ENCODE measurements at regions of chr2 and their contacts with region 1.

Region 1: DNA sequence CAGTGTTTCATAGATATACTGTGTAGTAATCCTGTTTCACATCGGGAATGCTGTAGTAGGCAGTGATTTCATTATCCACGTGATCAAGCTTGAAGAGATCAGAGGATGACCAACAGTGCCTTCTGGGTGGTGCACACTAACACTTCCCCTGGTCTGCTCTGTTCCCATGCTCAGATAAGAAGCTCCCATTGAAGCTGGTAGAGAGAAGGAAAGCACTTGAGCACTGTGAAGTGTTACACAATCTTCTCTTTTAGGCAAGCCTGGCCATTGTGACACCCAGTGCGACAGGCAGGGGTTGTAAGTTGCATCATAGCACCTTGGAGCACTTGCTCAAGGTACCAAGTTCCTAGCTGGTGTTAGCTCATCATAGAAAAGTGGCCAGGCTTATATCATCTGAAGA is 30.6 kb upstream of the GPD2 start:
- DNase-seq: no peak
- H3K4me3 ChIP-seq: no peak overlapping the region
- H3K27me3 ChIP-seq: no peaks in the 10 kb centered on the region
- CTCF ChIP-seq: no peak

Region 2: DNA sequence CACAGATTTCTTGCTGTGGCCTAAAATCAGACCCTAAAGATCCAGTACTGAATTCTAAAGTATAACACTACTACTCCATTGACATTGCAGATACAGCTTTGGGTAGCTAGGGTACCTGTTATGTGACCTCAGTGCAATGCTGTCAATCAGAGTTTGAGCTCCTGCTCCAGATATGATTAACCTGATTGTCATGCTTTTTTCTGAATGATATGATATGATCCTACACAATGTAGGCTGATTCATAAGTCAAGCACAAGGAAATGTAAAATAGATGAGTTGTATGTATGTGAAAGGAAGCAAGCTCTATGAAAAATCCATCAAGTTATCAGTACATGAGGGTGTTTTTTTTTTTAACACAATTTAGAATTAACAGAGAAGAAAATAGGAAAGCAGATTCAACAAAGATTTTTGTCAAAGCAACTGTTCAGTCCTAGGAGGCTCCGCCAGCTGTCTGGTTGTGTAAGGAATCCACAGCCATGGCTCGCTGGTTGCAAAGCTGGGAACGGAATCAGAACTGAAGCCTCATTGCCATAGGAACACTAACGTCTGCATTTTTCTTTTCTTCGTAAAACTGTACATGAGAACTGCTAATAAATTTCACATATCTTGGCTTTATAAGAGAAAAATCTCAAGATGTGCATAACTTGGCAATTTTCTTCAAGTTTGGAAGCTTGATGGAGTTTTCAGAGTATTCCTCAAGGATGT is 126.0 kb before region 1 on chr2:
- CTCF ChIA-PET with region 1: no interaction called
- POLR2A ChIA-PET with region 1: interaction called, 21 read pairs
- DNase-seq: no peak
- H3K4me3 ChIP-seq: no peak overlapping the region
- H3K27me3 ChIP-seq: no peaks in the 10 kb centered on the region
- CTCF ChIP-seq: no peak

Measured in BJ (cell line).